Mammary epithelial cell (primary cell): ENCODE measurements at regions of chr2 and their contacts with region 1.

Region 1: GRCh38 chr2:178914259-178914849 is 107.1 kb upstream of the TTN start:
- DNase-seq: peak; percentile 75
- H3K4me3 ChIP-seq: no peak overlapping the region
- H3K27ac ChIP-seq: no peak overlapping the region
- H3K4me1 ChIP-seq: peaks cover 11% of the 10 kb centered on the region
- H3K27me3 ChIP-seq: no peaks in the 10 kb centered on the region
- CTCF ChIP-seq: peak; percentile 87 to 92

Region 2: DNA sequence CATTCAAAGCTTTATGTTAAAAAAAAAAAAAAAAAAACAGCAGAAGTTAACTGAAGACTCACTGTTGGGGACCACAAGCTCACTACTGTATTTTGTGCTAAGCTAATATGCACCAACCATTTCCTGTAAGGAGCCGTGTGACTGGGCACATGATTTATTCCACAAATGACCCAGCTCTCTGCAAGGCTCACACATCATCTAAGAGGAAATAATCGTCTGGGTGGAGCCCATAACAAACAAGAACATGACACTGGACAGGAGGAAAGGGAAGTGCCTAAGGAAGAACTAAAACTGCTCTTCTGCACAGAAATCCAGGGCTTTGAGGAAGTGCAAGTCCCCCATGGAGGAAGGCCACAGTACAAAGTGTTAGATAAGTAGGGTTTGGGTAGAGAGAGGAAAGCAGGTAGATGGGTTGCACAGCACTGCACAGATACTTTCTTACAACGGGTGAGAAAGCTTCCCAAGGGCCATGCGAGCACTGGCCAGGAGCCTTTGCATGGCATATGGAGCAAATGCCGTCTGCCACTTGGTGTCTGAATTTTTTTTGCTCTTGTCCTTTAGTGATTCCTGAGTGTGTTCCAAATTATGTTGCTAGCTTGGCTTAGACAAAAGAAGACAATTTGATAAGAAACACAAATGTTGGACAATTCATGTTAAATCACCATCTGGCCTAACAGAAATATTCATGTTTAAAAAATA is 1674.3 kb before region 1 on chr2:
- CTCF ChIA-PET with region 1: no interaction called
- dilution Hi-C with region 1: no loop called
- in situ Hi-C with region 1: no loop called
- intact Hi-C with region 1: no loop called
- DNase-seq: peak; percentile 52
- H3K4me3 ChIP-seq: no peak overlapping the region
- H3K27ac ChIP-seq: peak overlapping the region; percentile 92
- H3K4me1 ChIP-seq: peaks cover 45% of the 10 kb centered on the region
- H3K27me3 ChIP-seq: no peaks in the 10 kb centered on the region
- CTCF ChIP-seq: no peak

Region 3: GRCh38 chr2:178615969-178616368 is 298.4 kb before region 1 on chr2:
- CTCF ChIA-PET with region 1: no interaction called
- dilution Hi-C with region 1: no loop called
- in situ Hi-C with region 1: no loop called
- intact Hi-C with region 1: no loop called
- DNase-seq: no peak
- H3K4me3 ChIP-seq: no peak overlapping the region
- H3K27ac ChIP-seq: no peak overlapping the region
- H3K4me1 ChIP-seq: no peaks in the 10 kb centered on the region
- H3K27me3 ChIP-seq: no peaks in the 10 kb centered on the region
- CTCF ChIP-seq: no peak

Region 4: GRCh38 chr2:178796079-178796677 is 118.2 kb before region 1 on chr2:
- CTCF ChIA-PET with region 1: no interaction called
- dilution Hi-C with region 1: no loop called
- in situ Hi-C with region 1: loop called (anchors 10 kb)
- intact Hi-C with region 1: loop called (anchors 1 kb)
- DNase-seq: peak; percentile 10
- H3K4me3 ChIP-seq: no peak overlapping the region
- H3K27ac ChIP-seq: no peak overlapping the region
- H3K4me1 ChIP-seq: no peaks in the 10 kb centered on the region
- H3K27me3 ChIP-seq: no peaks in the 10 kb centered on the region
- CTCF ChIP-seq: peak; percentile 40 to 57

Region 5: DNA sequence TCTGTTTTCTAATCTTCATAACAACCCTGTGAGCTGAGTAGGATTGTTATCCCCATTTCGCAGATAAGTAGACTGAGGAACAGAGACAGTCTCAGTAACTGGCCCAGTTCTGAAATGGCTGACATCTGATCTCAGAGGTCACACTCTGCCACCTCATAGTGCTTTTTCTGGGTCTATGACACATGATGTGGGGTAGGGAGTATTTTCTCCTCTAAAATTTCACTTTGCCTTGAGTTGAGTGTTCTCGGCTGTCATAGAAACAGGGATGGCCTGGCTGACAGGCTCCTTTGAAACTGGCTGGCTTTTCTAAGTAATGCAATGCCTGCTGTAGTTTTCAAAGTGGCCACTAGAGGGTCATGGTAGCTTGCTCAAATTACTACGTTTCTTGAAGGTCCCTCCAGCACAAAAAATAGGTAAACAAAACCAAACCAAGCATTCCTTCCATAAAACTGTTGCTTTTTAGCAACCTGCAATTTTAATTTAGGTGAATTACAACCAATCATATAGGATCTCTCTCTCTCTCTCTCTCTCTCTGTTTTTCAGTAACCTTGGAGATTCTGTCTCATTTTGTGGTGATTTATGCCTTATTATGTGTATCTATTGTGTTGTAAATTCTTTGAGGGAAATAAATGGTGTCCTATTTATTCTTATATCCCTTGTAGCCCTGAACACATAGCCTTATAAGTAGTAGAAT is 22.9 kb before region 1 on chr2:
- CTCF ChIA-PET with region 1: no interaction called
- dilution Hi-C with region 1: no loop called
- in situ Hi-C with region 1: no loop called
- intact Hi-C with region 1: loop called (anchors 2 kb)
- DNase-seq: peak; percentile 52
- H3K4me3 ChIP-seq: no peak overlapping the region
- H3K27ac ChIP-seq: no peak overlapping the region
- H3K4me1 ChIP-seq: no peaks in the 10 kb centered on the region
- H3K27me3 ChIP-seq: no peaks in the 10 kb centered on the region
- CTCF ChIP-seq: peak; percentile 90 to 96

Region 6: GRCh38 chr2:179005976-179006375 is 91.6 kb after region 1 on chr2:
- CTCF ChIA-PET with region 1: no interaction called
- dilution Hi-C with region 1: no loop called
- in situ Hi-C with region 1: no loop called
- intact Hi-C with region 1: no loop called
- DNase-seq: no peak
- H3K4me3 ChIP-seq: no peak overlapping the region
- H3K27ac ChIP-seq: no peak overlapping the region
- H3K4me1 ChIP-seq: no peaks in the 10 kb centered on the region
- H3K27me3 ChIP-seq: peaks cover 2% of the 10 kb centered on the region
- CTCF ChIP-seq: no peak

Region 7: GRCh38 chr2:179460181-179460929 is 546.0 kb after region 1 on chr2:
- CTCF ChIA-PET with region 1: no interaction called
- dilution Hi-C with region 1: no loop called
- in situ Hi-C with region 1: no loop called
- intact Hi-C with region 1: no loop called
- DNase-seq: peak; percentile 95
- H3K4me3 ChIP-seq: no peak overlapping the region
- H3K27ac ChIP-seq: peak overlapping the region; percentile 78
- H3K4me1 ChIP-seq: peaks cover 12% of the 10 kb centered on the region
- H3K27me3 ChIP-seq: no peaks in the 10 kb centered on the region
- CTCF ChIP-seq: no peak